Right cardiac atrium (tissue), 5 donors: ENCODE measurements at regions of chr2 and their contacts with region 1.

Region 1: DNA sequence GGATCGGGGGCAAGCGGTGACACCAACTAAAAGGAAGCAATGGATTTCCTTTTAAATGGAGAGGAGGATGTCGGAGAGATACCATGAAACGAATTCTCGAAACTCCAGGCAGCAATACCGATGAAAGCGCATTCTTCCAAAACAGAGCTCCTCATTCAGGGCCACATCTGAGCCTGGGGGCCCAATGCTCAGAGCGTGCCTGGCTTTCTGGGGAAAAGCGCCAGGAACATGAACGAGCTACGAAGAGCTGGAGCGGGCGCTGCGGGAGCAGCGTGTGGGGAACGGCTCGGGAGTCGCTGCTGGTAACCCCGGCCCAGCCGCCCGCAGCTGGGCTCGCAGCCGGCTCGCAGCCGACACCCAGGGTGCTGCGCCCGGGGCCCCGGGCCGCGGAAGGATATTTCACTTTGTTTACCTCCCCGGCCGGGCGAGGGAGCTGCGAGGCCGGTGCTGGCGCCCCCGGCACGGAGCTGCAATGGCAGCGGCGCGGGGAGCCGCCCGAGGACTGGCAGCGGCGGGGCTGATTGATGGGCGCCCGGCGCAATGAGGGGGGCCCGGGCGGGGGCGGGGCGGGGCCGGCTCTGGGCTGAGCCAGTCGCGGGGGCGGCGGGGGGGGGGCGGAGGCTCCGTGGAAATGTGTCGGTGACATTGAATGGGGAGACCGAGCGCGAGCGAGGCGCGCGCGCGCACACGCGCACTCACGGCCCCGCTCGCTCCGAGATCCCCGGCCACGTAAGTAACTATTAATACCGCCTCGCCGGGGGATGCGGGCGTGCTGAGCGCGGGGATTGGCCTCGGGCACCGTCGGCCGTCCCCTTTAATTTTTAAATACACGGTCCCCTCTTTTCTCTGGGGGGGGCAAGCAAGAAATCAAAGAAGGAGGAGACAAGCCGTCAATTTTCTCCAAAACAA is at the start of gene TRIB2:
- DNase-seq: peak; percentile 90 to 98 (median 97)
- ATAC-seq: peak; percentile 87 to 90
- H3K4me3 ChIP-seq: peak within 1 kb of the TSS; percentile 85
- H3K27ac ChIP-seq: peak within 1 kb of the TSS; percentile 100
- H3K4me1 ChIP-seq: peaks cover 9% of the 10 kb centered on the region
- H3K27me3 ChIP-seq: no peaks in the 10 kb centered on the region
- total RNA-seq, gene TRIB2: 24.7 to 32.2 (median 28.2) TPM

Region 2: GRCh38 chr2:11863513-11864328 is 852.8 kb before region 1 on chr2:
- intact Hi-C with region 1: loop called in 1 of 4 experiments (anchors 5 kb)
- DNase-seq: peak; percentile 91 to 95 (median 92)
- ATAC-seq: peak; percentile 94 to 98
- H3K4me3 ChIP-seq: no peak overlapping the region
- H3K27ac ChIP-seq: no peak overlapping the region
- H3K4me1 ChIP-seq: peaks cover 3% of the 10 kb centered on the region
- H3K27me3 ChIP-seq: no peaks in the 10 kb centered on the region

Region 3: DNA sequence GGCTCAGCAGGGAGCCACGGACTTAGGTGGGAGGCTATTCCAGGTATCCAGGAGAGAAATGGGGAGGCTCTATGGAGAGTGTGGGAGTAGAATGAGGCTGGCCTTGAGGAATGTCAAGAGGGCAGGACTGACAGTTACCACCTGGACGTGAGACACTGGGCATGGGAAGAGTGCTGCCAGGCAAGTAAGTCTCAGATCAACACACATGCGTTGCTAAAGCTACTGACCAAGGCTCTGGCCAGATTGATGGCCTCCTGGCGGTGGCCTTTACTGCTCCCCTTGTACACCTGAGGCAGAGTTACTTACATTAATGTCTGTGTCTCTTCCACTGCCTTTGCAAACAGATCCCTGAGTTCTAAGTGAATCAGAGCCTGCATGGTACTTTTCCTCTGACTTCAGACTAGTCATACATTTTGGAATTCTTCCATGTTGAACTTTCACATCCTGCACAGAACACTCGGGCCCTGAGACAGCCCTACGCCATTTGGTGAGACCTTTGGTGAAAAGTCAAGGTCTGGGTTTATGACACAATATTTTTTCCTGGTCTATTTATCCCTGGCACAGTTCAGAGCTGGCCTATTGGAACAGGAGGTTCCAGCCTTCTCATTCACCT is 398.6 kb before region 1 on chr2:
- intact Hi-C with region 1: loop called in 1 of 4 experiments (anchors 10 kb)
- DNase-seq: no peak
- ATAC-seq: peak in 1 of 2 donors; percentile 35
- H3K4me3 ChIP-seq: no peak overlapping the region
- H3K27ac ChIP-seq: no peak overlapping the region
- H3K4me1 ChIP-seq: peaks cover 1% of the 10 kb centered on the region
- H3K27me3 ChIP-seq: no peaks in the 10 kb centered on the region

Region 4: DNA sequence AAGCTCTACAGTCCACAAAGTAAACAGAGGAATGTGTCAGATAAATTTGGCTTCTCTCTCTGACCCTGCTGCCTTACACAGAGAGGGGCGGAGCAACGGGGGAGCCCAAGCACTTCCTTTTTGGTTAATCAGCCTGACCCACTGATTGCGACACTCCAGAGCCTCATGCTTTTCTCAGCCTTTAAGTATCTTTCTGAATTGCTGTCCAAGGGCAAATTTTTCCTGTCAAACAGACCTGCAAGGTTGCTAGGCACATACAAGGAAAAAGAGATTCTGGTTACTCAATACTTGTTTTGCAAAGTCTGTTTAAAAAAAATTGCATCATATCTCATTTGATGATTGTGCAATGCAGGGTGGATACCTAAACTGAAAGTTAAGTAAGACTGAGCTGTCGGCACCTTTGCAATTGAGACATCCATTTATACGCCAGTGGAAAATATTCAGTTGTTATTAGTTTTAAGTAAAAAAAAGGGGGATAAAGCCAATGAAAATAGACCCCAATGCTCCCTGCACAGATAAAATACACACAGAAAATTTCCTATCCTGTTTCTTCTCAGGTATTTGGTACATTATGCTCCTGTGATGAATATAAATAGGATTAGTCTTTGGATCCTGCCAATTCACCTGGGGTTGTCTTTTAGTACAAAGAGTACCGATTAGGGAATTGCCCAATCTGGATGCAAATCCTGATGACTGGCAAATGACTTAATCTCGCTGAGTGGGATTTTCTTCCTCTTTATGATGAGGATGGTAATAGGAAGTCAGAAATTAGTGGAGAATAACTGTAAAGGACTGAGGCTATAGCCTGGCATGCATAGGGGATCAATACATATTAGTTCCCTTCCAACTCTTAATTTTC is 260.0 kb before region 1 on chr2:
- intact Hi-C with region 1: loop called in 1 of 4 experiments (anchors 10 kb)
- DNase-seq: peak; percentile 92 to 96 (median 93)
- ATAC-seq: peak; percentile 97 to 98
- H3K4me3 ChIP-seq: no peak overlapping the region
- H3K27ac ChIP-seq: peak overlapping the region; percentile 51
- H3K4me1 ChIP-seq: peaks cover 3% of the 10 kb centered on the region
- H3K27me3 ChIP-seq: no peaks in the 10 kb centered on the region

Region 5: DNA sequence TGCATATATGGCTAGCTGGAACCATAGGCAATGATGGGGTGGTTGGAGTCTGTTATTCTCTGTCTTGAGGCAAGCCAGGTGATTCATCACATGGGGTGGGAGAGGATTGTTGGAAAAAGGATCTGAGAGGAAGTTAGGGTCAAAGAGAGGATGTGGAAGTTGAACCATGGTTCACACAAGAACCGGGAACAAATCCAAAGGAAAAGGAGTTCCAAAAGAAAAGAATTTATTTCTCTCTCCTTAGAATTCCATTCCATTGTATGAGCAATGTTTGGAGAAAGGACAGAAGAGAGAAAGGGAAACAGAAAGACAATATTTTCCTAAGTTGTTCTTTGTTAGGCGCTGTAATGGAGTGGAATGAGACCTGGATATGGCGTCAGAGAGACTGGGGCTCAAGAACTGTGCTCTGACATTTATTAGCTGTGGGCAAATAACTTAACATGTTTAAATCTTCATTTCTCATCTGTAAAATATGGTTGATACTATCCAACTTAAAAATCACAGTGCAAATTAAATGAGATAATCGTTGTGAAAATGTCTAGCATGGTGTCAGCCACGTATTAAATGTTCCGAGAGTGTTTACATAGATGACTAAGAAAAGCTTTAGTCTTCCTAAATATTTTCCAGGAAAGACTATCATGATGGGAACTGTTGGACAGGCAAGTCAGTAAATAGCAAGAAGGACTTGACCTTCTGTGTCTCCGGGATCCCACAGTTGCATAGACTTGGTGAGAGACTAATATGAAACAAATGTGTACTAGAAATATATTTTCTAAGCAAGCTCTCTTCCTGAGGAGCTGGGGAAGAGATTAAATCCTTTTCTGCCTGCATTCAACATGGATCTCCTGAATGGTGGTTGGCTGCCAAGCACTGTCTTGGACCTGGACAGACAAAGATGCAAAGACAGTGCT is 71.6 kb after region 1 on chr2:
- intact Hi-C with region 1: no loop called
- DNase-seq: peak in 1 of 3 donors; percentile 29
- ATAC-seq: peak; percentile 69 to 96
- H3K4me3 ChIP-seq: no peak overlapping the region
- H3K27ac ChIP-seq: peak overlapping the region; percentile 63
- H3K4me1 ChIP-seq: no peaks in the 10 kb centered on the region
- H3K27me3 ChIP-seq: no peaks in the 10 kb centered on the region

Region 6: GRCh38 chr2:12931186-12931844 is 214.8 kb after region 1 on chr2:
- intact Hi-C with region 1: loop called (anchors 2 to 5 kb)
- DNase-seq: no peak
- ATAC-seq: peak; percentile 86 to 89
- H3K4me3 ChIP-seq: no peak overlapping the region
- H3K27ac ChIP-seq: no peak overlapping the region
- H3K4me1 ChIP-seq: peaks cover 2% of the 10 kb centered on the region
- H3K27me3 ChIP-seq: no peaks in the 10 kb centered on the region

Region 7: DNA sequence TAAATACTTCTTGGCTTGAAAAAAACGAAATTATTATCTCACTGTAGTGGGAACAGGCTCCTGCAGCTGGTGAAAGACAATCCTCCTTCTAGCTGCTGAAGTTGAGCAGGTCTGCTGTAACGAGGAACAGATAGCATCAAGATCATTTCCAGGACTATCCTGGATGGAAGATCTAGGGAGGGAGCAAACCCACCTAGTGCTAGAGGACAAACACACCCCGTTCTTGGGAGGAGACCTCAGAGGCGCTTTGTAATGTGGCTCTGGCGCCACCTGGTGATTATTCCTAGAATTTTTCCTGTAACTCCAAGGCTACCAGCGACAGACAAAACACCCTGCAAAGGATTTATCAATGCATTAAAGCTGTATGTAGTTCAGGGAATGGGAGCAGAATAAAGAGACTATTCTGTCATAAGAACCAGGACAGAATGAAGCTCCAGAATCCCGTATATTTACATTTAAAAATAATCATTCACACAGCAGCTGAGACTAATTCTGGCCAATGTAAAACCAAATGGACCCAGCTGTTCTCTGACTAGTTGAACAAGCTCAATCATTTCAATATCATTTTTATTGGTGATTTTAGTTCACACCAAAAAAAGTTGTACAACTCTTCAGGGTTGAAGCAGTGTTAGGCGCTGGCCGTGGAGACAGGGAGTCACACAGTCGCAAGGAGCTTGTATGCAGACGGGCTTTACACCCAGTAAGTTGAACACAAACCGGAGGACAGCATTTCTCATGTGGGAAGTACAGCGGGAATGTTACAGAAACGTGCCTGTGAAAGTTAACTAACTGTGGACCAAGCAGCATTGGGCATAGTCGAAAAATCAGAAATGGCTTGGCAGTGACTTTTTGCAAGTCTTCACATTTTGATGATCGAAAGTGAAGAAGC is 290.5 kb after region 1 on chr2:
- intact Hi-C with region 1: loop called (anchors 2 to 10 kb)
- DNase-seq: peak; percentile 44 to 61 (median 61)
- ATAC-seq: peak; percentile 90 to 93
- H3K4me3 ChIP-seq: peak overlapping the region; percentile 25
- H3K27ac ChIP-seq: peak overlapping the region; percentile 58
- H3K4me1 ChIP-seq: peaks cover 2% of the 10 kb centered on the region
- H3K27me3 ChIP-seq: no peaks in the 10 kb centered on the region